Caco-2 (cell line): ENCODE measurements at regions of chr1 and their contacts with region 1.

Region 1: DNA sequence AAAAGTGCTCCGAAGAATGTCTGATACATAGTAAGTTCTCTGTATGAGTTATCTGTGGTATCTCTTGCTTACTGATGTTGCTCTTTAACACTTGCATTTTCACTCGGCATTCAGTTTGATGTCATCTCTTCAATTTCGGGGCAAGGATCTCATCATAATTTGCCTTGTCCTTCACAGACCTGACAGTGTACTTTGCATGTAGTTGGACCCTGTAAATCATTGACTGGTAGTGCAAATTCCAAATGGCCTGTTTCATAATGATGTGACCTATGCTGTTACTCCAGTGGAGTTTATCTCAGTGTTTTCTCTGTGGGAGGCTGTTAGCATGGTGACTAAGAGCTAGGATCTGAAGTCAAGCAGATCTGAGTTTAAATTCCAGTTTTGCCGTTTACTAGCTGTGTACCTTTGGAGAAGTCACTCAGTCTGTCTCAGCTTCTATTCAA is 34.2 kb upstream of the ABCD3 start:
- DNase-seq: peak; percentile 81 to 82
- H3K4me3 ChIP-seq: no peak overlapping the region
- H3K4me3 Mint-ChIP-seq: peak overlapping the region; percentile 63
- H3K27ac Mint-ChIP-seq: peak overlapping the region; percentile 90
- H3K4me1 ChIP-seq: peaks cover 66% of the 10 kb centered on the region
- H3K4me1 Mint-ChIP-seq: peaks cover 20% of the 10 kb centered on the region
- H3K27me3 ChIP-seq: no peaks in the 10 kb centered on the region
- H3K27me3 Mint-ChIP-seq: no peaks in the 10 kb centered on the region
- CTCF ChIP-seq: no peak

Region 2: DNA sequence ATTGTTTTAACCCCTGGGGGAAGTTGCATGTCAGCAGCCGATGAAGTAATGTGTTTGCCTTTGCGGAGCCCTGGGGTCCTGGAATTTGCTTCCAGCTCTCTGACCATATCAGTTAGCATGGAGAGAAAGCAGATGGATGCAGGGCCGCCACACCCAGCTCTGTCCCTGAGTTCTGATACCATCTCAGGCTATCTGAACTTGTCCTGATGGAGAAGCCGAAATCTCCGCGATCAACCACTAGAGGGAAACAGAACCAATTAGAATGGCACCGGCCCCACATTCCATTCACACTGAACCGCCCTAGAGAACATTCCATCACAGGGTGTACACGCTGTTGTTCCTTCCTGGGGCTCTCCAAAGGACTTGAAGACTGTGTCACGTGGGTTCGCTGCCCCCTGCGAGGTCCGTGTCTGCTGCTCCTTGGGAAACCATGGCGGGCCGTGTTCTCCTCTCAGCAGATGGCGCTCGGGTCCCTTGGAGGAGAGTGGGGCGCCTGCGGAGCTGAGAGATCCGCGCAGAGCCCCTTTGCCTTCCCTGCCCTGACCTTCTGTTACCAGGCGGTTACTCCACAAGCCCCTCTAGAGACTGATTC is 338.4 kb before region 1 on chr1:
- CTCF ChIA-PET with region 1: no interaction called
- POLR2A ChIA-PET with region 1: no interaction called
- intact Hi-C with region 1: no loop called
- DNase-seq: peak; percentile 91 to 95
- H3K4me3 ChIP-seq: peak overlapping the region; percentile 12
- H3K4me3 Mint-ChIP-seq: peak overlapping the region; percentile 24
- H3K27ac Mint-ChIP-seq: peak overlapping the region; percentile 68
- H3K4me1 ChIP-seq: peaks cover 9% of the 10 kb centered on the region; the same call in 1 of the 2 replicates
- H3K4me1 Mint-ChIP-seq: peaks cover 7% of the 10 kb centered on the region
- H3K27me3 ChIP-seq: no peaks in the 10 kb centered on the region
- H3K27me3 Mint-ChIP-seq: no peaks in the 10 kb centered on the region
- CTCF ChIP-seq: peak; percentile 40 to 73

Region 3: GRCh38 chr1:94342405-94342804 is 41.6 kb before region 1 on chr1:
- CTCF ChIA-PET with region 1: interaction called, 6 read pairs
- POLR2A ChIA-PET with region 1: interaction called, 12 read pairs
- intact Hi-C with region 1: loop called (anchors 1 kb)
- DNase-seq: peak; percentile 74 to 83
- H3K4me3 ChIP-seq: no peak overlapping the region
- H3K4me3 Mint-ChIP-seq: peak overlapping the region; percentile 47
- H3K27ac Mint-ChIP-seq: peak overlapping the region; percentile 80
- H3K4me1 ChIP-seq: peaks cover 56% of the 10 kb centered on the region
- H3K4me1 Mint-ChIP-seq: peaks cover 57% of the 10 kb centered on the region
- H3K27me3 ChIP-seq: no peaks in the 10 kb centered on the region
- H3K27me3 Mint-ChIP-seq: no peaks in the 10 kb centered on the region
- CTCF ChIP-seq: no peak

Region 4: DNA sequence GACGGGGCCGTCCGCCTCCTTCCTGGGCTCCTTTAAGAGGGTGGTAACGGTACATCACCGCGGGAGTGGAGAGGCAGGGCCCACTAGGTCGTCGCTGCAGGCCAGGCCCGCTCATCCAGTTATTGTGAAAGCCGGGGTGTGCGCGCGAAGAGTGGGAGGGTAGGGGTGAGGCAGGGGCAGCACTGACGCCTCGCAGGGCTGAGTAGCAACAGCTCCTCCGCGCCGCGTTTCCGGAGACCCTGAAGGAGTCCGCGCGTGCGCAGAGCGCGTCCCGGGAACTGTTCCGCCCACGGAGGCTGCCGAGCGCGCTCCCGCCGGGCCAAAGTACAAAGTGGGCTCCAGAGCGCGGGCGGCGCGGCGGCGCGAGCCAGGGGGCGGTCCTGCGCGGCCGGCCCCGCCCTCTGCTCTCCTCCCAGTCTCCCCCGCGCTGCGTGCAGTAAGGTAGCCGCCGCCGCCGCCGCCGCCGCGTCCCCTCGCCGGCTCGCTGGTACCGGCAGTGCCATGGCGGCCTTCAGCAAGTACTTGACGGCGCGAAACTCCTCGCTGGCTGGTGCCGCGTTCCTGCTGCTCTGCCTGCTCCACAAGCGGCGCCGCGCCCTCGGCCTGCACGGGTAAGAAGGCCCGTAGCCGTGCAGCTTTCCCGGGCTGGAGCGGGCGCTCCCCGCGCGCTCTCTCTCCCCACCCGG is 34.1 kb after region 1 on chr1 and contains the start of gene ABCD3:
- CTCF ChIA-PET with region 1: no interaction called
- POLR2A ChIA-PET with region 1: interaction called, 4 read pairs
- intact Hi-C with region 1: loop called (anchors 1 kb)
- DNase-seq: peak; percentile 95
- H3K4me3 ChIP-seq: peak within 1 kb of the TSS; percentile 87
- H3K4me3 Mint-ChIP-seq: no peak within 1 kb of the TSS
- H3K27ac Mint-ChIP-seq: peak within 1 kb of the TSS; percentile 74
- H3K4me1 ChIP-seq: peaks cover 27% of the 10 kb centered on the region
- H3K4me1 Mint-ChIP-seq: peaks cover 15% of the 10 kb centered on the region
- H3K27me3 ChIP-seq: no peaks in the 10 kb centered on the region
- H3K27me3 Mint-ChIP-seq: no peaks in the 10 kb centered on the region
- CTCF ChIP-seq: no peak
- total RNA-seq, gene ABCD3: 93.4 and 94.4 TPM in 2 replicates